ENCODE measurements at regions of chr18 and their contacts with region 1.

Region 1: DNA sequence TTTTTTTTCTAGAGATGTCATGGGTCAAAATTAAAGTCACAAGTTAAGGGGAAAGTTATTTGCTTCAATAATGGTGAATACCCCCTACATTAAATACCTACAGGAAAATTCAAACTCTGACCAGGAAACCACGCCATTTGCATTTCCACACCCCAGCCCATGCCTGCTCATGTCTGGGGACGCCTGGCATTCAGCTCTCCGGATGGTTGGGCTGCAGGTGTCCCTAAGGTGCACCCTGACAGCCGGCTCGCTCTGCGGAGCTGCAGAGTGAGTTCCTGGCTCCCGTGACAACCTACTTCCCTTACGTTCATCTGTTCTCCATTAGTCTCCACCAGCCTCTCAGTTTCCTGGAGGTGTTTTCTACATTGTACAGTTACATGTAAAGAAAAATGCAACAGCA is 122.7 kb upstream of the RIOK3 start:
- DNase-seq: peak in 1 of 2 experiments; percentile 15
- H3K4me3 ChIP-seq: peak overlapping the region; percentile 71
- H3K27ac ChIP-seq: peak overlapping the region; percentile 93
- H3K4me1 ChIP-seq: peaks cover 24% of the 10 kb centered on the region
- H3K27me3 ChIP-seq: no peaks in the 10 kb centered on the region
- CTCF ChIP-seq: no peak

Region 2: GRCh38 chr18:23231340-23232021 is 98.9 kb before region 1 on chr18:
- CTCF ChIA-PET with region 1: interaction called, 3 read pairs
- POLR2A ChIA-PET with region 1: no interaction called
- intact Hi-C with region 1: loop called (anchors 1 kb)
- DNase-seq: peak; percentile 58 to 76
- H3K4me3 ChIP-seq: no peak overlapping the region
- H3K27ac ChIP-seq: peak overlapping the region; percentile 29; the same call in 1 of the 2 replicates
- H3K4me1 ChIP-seq: peaks cover 17% of the 10 kb centered on the region
- H3K27me3 ChIP-seq: no peaks in the 10 kb centered on the region
- CTCF ChIP-seq: no peak

Region 3: DNA sequence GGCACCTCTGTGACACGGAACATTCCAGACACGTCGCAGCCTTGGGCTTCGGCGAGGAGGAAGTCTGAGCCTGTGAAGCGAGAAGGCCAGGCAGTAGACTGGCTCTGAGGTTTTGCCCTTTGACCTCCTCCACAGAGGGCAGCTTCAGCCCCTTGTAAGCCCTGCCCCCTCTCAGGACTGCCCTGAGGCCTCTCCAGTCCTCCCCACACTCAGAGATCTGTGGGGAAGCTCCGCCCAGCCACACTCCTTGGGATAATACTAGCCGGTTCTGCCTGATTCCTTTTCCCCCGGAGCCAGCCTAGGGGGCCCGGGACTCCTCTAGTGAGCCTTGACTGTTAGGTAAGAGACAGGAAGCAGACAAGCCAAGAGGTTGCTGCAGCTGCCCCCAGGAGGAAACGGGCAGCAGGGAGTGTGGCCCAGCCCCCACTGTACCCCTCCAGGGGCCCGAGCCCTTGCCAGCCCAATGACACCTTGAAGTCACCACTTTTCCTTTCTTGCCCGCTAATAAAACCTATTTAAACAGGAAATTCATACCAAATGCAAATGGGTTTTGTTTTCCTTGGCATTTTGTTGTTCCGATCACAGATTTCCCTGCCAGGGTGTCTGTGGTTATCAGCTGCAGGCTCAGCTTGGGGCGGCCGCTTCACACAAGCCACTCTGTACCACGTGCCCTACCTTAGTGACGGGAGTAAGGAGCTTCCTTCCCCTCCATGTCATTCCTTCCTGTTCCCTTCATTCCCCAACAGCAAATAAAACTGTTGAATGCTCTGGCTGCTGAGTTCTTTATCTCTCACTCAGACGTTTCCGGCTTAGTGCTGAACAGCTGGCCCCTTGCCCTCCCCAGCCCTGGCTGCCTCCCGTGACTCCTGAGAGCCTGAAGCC is 70.5 kb before region 1 on chr18:
- CTCF ChIA-PET with region 1: no interaction called
- POLR2A ChIA-PET with region 1: no interaction called
- intact Hi-C with region 1: loop called (anchors 2 kb)
- DNase-seq: peak; percentile 77 to 89
- H3K4me3 ChIP-seq: peak overlapping the region; percentile 48; the same call in 1 of the 2 replicates
- H3K27ac ChIP-seq: peak overlapping the region; percentile 91
- H3K4me1 ChIP-seq: peaks cover 45% of the 10 kb centered on the region
- H3K27me3 ChIP-seq: no peaks in the 10 kb centered on the region
- CTCF ChIP-seq: no peak

Region 4: DNA sequence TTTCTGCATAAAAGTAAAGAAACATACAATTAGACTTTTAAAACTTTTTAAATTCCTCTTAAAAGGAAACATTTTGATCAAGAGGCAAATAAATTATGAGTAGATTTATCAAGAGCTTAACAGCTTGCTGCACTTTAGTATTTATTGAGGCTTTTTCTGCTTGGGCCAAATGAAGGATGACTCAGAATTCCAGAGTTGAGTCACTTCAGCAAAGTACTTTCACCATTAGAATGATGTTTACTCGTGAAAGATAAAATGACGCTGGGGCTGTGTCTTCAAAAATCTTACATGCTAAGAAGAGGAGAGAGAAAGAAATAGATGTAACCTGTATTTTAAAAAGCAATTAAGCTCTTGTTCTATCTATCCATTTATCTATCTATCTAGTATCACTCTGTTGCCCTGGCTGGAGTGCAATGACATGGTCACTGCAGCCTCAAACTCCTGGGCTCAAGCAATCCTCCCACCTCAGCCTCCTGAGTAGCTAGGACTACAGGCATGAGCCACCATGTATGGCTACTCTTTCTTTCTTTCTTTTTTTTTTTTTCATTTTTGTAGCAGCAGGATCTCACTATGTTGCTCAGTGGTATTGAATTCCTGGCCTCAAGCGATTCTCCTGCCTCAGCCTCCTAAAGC is 47.4 kb after region 1 on chr18:
- CTCF ChIA-PET with region 1: no interaction called
- POLR2A ChIA-PET with region 1: no interaction called
- intact Hi-C with region 1: loop called (anchors 1 kb)
- DNase-seq: peak in 1 of 2 experiments; percentile 66
- H3K4me3 ChIP-seq: no peak overlapping the region
- H3K27ac ChIP-seq: peak overlapping the region; percentile 86
- H3K4me1 ChIP-seq: peaks cover 45% of the 10 kb centered on the region
- H3K27me3 ChIP-seq: no peaks in the 10 kb centered on the region
- CTCF ChIP-seq: no peak

Region 5: GRCh38 chr18:23401400-23402347 is 71.3 kb after region 1 on chr18:
- CTCF ChIA-PET with region 1: no interaction called
- POLR2A ChIA-PET with region 1: no interaction called
- intact Hi-C with region 1: loop called (anchors 2 kb)
- DNase-seq: peak; percentile 63 to 83
- H3K4me3 ChIP-seq: no peak overlapping the region
- H3K27ac ChIP-seq: peak overlapping the region; percentile 55
- H3K4me1 ChIP-seq: peaks cover 49% of the 10 kb centered on the region
- H3K27me3 ChIP-seq: no peaks in the 10 kb centered on the region
- CTCF ChIP-seq: no peak

Region 6: DNA sequence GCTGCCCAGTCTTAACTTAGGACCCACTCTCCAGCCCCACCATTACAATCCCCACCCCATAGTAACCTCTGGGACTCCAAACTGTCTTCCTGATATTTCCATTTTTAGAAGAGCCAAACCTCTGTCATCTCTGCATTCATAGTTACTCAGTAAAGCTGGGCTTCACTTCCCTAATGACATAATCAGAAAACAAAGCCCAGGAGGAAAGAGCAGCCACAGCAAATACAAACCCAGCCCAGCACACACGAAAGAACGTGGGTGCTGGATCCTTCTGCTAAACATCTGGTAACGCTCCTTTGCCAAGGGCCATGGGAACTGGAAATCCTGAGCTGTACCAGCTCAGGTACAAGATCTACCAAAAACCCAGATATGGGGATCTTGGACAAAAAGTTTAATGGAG is 85.9 kb after region 1 on chr18:
- CTCF ChIA-PET with region 1: no interaction called
- POLR2A ChIA-PET with region 1: no interaction called
- intact Hi-C with region 1: no loop called
- DNase-seq: no peak
- H3K4me3 ChIP-seq: no peak overlapping the region
- H3K27ac ChIP-seq: no peak overlapping the region
- H3K4me1 ChIP-seq: peaks cover 6% of the 10 kb centered on the region
- H3K27me3 ChIP-seq: no peaks in the 10 kb centered on the region
- CTCF ChIP-seq: no peak

Measured in PC-9 (cell line).